ENCODE measurements at regions of chr17 and their contacts with region 1.

Region 1: DNA sequence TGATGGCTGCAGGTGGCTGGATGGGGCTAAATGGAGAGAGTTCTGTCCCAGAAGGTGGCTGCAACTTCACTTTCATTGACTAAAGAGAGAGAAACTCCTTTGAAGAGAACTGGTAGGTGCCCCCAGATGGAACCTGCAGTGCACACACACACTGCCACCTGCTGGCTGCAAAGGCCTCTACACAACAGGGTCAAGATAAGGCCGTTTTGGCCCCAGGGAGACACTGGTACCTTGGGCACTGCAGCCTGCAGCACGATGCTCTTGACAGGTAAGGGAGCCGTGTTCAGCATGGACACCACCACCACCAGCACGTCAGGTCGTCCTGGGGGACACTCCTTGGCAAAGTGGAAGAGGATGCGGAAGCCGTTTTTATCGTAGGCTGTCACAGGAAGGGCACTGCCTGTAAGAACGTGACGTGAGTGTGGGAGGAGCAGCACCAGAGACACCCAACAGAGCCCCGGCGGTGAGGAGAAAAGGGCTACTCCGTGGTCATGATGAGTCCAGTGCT is 22.7 kb downstream of the GGA3 start:
- DNase-seq: peak in 1 of 2 experiments; percentile 72
- H3K4me3 ChIP-seq: no peak overlapping the region
- H3K27ac ChIP-seq: no peak overlapping the region
- H3K4me1 ChIP-seq: peaks cover 0 to 4% (median 0%) of the 10 kb centered on the region in 4 experiments; a peak in 3 of 7 replicates
- H3K27me3 ChIP-seq: no peaks in the 10 kb centered on the region
- CTCF ChIP-seq: peak; percentile 83 to 96 (median 94)
- EP300 ChIP-seq: no peak
- POLR2A ChIP-seq: no peak
- RAD21 ChIP-seq: peak; percentile 41 to 59

Region 2: GRCh38 chr17:75109407-75110233 is 129.1 kb before region 1 on chr17 and contains the start of gene ARMC7:
- CTCF ChIA-PET with region 1: interaction called, 27 read pairs
- POLR2A ChIA-PET with region 1: interaction called, 5 read pairs
- DNase-seq: peak in 1 of 2 experiments; percentile 97
- H3K4me3 ChIP-seq: peak within 1 kb of the TSS; percentile 49 to 78 (median 75)
- H3K27ac ChIP-seq: no peak within 1 kb of the TSS; the same call in 1 of the 2 replicates
- H3K4me1 ChIP-seq: peaks cover 0 to 2% (median under 1%) of the 10 kb centered on the region in 4 experiments; a peak in 3 of 7 replicates
- H3K27me3 ChIP-seq: no peaks in the 10 kb centered on the region
- CTCF ChIP-seq: no peak
- EP300 ChIP-seq: no peak
- POLR2A ChIP-seq: peak in 1 of 2 experiments; percentile 56; a peak in 2 of 3 replicates
- RAD21 ChIP-seq: no peak; a peak in 1 of 4 replicates
- total RNA-seq, gene ARMC7: 13.6 TPM in 2 replicates

Region 3: GRCh38 chr17:75159191-75160031 is 79.3 kb before region 1 on chr17:
- CTCF ChIA-PET with region 1: no interaction called
- POLR2A ChIA-PET with region 1: no interaction called
- DNase-seq: no peak
- H3K4me3 ChIP-seq: no peak overlapping the region
- H3K27ac ChIP-seq: no peak overlapping the region
- H3K4me1 ChIP-seq: peaks cover 3 to 10% (median 8%) of the 10 kb centered on the region in 4 experiments; a peak in 6 of 7 replicates
- H3K27me3 ChIP-seq: no peaks in the 10 kb centered on the region
- CTCF ChIP-seq: no peak
- EP300 ChIP-seq: no peak
- POLR2A ChIP-seq: no peak
- RAD21 ChIP-seq: no peak

Region 4: GRCh38 chr17:75199886-75200618 is 38.7 kb before region 1 on chr17:
- CTCF ChIA-PET with region 1: interaction called, 30 read pairs
- POLR2A ChIA-PET with region 1: no interaction called
- DNase-seq: no peak
- H3K4me3 ChIP-seq: no peak overlapping the region
- H3K27ac ChIP-seq: no peak overlapping the region
- H3K4me1 ChIP-seq: peaks cover 0 to 2% (median 0%) of the 10 kb centered on the region in 4 experiments; a peak in 2 of 7 replicates
- H3K27me3 ChIP-seq: no peaks in the 10 kb centered on the region
- CTCF ChIP-seq: no peak
- EP300 ChIP-seq: no peak
- POLR2A ChIP-seq: no peak
- RAD21 ChIP-seq: no peak

Region 5: GRCh38 chr17:75250009-75250471 is 11.3 kb after region 1 on chr17:
- CTCF ChIA-PET with region 1: interaction called, 88 read pairs
- POLR2A ChIA-PET with region 1: interaction called, 13 read pairs
- DNase-seq: no peak
- H3K4me3 ChIP-seq: no peak overlapping the region
- H3K27ac ChIP-seq: no peak overlapping the region
- H3K4me1 ChIP-seq: peaks cover 0 to 7% (median under 1%) of the 10 kb centered on the region in 4 experiments; a peak in 3 of 7 replicates
- H3K27me3 ChIP-seq: no peaks in the 10 kb centered on the region
- CTCF ChIP-seq: no peak
- EP300 ChIP-seq: no peak
- POLR2A ChIP-seq: no peak
- RAD21 ChIP-seq: no peak

Region 6: DNA sequence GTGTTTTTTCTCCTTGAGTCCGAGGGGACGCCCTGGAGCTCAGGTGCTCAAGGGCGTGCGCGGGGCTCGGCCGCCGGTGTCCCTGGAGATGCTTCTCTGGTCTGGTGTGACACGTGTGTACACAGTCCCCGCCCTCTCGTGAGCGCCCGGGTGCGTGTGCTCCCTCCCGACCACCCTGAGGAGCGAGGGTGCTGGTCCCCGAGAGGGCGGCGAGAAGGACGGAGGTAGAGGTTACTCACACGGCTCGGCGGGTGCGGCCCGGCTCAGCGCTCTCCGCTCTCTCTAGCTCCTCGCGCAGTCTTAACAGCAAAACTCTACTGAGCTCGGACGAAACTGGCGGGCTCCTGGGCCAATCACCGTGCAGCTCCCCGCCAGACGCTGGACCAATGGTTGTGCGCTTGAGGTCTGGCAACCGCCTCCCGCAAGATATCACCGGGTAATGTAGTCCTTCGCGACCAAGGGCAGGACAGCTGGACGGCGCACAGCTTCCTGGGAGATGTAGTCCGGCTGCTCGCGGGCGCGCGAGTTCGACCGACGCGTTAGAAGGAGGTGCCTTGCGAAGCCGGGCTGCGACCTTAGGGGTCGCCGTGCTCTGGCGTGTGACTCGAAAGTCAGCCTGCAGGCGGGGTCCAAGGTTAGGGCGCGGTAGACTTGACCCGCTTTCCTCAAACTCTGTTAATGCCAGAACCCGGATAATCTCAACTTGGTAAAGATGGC is 50.5 kb after region 1 on chr17 and contains the start of gene SLC25A19:
- CTCF ChIA-PET with region 1: interaction called, 19 read pairs
- POLR2A ChIA-PET with region 1: no interaction called
- DNase-seq: peak; percentile 94 to 98
- H3K4me3 ChIP-seq: peak within 1 kb of the TSS; percentile 77 to 94 (median 82)
- H3K27ac ChIP-seq: no peak within 1 kb of the TSS
- H3K4me1 ChIP-seq: no peaks in the 10 kb centered on the region; a peak in 3 of 7 replicates
- H3K27me3 ChIP-seq: no peaks in the 10 kb centered on the region; a peak in 2 of 7 replicates
- CTCF ChIP-seq: peak; percentile 57 to 83 (median 69)
- EP300 ChIP-seq: no peak
- POLR2A ChIP-seq: peak in 1 of 2 experiments; percentile 83; a peak in 2 of 3 replicates
- RAD21 ChIP-seq: peak; percentile 63 to 72
- total RNA-seq, gene SLC25A19: 28.6 and 33.3 TPM in 2 replicates

Region 7: GRCh38 chr17:75430159-75430974 is 191.6 kb after region 1 on chr17:
- CTCF ChIA-PET with region 1: interaction called, 14 read pairs
- POLR2A ChIA-PET with region 1: no interaction called
- DNase-seq: peak; percentile 47
- H3K4me3 ChIP-seq: no peak overlapping the region
- H3K27ac ChIP-seq: no peak overlapping the region
- H3K4me1 ChIP-seq: no peaks in the 10 kb centered on the region
- H3K27me3 ChIP-seq: no peaks in the 10 kb centered on the region
- CTCF ChIP-seq: no peak
- EP300 ChIP-seq: no peak
- POLR2A ChIP-seq: no peak
- RAD21 ChIP-seq: no peak